Dendritic cell treated with granulocyte-macrophage colony-stimulating factor and Interleukin-4, amounts not matched to agents 40 ng/mL and 50 ng/mL, for 4 days (primary cell): ENCODE measurements at regions of chr7 and their contacts with region 1.

Region 1: GRCh38 chr7:128387216-128388144 is 22.3 kb downstream of the IMPDH1 start:
- H3K4me3 Mint-ChIP-seq: no peak overlapping the region
- H3K27ac Mint-ChIP-seq: no peak overlapping the region
- H3K4me1 Mint-ChIP-seq: peaks cover 23% of the 10 kb centered on the region
- H3K27me3 Mint-ChIP-seq: peaks cover 6% of the 10 kb centered on the region

Region 2: DNA sequence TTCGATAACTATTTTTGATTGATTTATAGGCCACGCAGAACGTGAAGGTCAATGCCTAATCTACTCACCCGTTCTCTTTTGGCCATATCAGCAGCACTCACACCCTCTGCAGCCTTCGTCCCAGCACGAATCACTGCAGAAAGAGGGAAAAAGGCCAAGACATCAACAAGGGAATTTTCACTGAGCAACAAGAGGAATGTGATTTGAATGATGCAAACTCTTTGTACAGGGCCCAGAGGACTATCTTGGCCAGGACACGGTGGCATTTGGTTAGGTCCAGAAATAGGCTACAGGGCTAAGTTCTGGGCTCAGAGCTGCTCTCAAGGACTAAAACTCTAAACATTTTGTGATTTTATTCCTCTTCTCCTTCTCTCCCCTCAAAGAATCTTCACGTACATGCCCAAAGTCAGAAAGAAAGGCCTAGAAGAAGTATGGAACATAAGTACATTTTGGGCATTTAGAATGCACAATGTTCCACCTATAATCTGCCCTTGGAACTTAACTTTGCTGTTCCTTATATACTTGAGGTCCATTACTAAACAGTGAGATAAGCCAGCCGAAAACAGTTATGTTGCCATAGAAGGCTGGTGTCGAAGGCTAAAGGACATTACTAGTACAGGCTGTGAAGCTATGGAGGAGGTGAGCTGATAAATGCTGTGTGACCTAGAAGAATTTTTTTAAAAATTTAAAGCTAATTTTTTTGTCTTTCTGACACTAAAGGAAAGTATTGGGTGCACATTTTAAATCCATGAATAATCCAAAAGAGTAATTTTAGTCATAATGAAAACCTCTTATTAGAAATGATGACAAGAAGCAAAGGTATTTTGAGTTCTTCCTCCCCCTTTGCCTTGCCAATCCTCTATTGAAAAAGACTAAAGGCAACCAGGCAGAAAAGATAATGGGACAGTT is 63.8 kb before region 1 on chr7:
- intact Hi-C with region 1: no loop called
- H3K4me3 Mint-ChIP-seq: no peak overlapping the region
- H3K27ac Mint-ChIP-seq: no peak overlapping the region
- H3K4me1 Mint-ChIP-seq: no peaks in the 10 kb centered on the region
- H3K27me3 Mint-ChIP-seq: no peaks in the 10 kb centered on the region

Region 3: DNA sequence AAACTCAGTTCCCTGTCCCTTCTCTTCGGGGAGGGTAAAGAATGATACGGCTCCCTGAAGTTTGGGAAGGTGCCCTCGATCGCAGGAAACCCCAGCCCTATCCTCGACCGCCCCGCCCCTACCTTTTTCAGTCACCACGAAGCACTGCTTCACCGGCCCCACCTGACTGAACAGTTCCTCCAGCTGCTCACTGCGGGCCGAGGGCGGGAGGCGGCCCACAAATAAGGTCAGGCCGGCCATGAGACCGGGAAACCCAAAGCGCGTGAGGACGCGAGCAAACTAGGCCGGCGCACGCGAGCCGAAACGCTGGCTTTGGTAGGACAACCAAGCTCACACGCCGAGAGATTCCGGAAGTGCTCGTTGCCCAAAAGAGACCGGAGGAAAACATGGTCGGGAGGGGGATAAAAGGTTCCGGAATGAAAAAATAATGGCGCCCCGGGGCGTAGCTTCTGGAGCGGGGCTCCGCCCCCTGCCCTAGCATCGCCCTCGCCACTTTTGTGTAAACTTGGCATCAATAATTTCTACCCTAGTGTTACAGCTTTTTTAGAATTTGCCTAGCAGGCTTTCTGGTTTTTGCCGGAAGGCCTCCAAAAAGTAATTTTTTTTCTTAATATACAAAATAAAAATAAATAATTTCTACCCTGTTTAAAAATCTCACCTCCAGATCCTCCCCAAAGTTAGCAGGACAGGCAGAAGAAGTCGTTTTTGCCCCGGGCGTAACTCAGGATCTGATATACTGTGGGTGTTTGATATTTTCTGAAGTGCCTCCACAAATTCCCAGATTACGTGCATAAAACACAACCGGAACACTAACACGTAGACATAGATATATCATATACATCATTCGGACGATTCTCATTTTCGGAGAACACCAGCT is 43.7 kb before region 1 on chr7 and contains the start of gene RBM28:
- intact Hi-C with region 1: loop called (anchors 1 kb)
- H3K4me3 Mint-ChIP-seq: peak within 1 kb of the TSS; percentile 95
- H3K27ac Mint-ChIP-seq: peak within 1 kb of the TSS; percentile 97
- H3K4me1 Mint-ChIP-seq: peaks cover 14% of the 10 kb centered on the region
- H3K27me3 Mint-ChIP-seq: peaks cover 7% of the 10 kb centered on the region